CD8-positive, alpha-beta T cell (primary cell): ENCODE measurements at regions of chr11 and their contacts with region 1.

Region 1: DNA sequence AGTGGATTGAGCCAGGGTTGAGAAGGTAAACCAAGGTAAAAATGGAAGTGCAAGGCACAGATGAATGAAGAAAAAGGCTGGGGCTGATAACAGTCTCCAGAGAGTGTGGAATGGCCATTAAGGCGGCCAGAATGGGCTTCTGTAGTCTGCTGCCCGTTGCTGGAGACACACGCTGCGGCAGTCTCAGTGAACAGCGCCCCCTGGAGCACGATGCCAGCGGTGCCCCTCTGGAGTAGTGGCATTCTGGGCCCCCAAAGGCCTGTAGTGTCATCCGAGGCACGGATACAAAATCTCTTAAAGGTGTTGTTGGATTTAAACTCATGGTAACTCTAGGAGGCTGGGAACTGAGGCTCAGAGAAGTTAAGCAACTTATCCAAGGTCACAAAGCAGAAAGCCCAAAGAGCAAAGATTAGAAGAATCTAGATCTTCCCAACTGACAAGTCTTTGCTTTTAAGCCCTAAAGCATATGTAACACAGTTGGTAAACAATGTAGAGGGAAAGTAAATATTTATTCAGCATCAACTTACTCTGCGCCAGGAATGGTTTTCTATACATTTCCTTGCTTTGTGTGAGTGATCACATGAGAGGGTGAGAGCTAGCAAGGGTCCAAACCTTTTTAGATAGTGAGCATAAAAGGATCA is 18.2 kb downstream of the KCNJ1 start:
- DNase-seq: peak; percentile 42 to 80 (median 69)
- ATAC-seq: peak; percentile 70
- H3K4me3 ChIP-seq: no peak overlapping the region
- H3K4me3 Mint-ChIP-seq: no peak overlapping the region
- H3K27ac ChIP-seq: no peak overlapping the region
- H3K27ac Mint-ChIP-seq: no peak overlapping the region
- H3K4me1 ChIP-seq: peaks cover 14% of the 10 kb centered on the region
- H3K4me1 Mint-ChIP-seq: peaks cover 28% of the 10 kb centered on the region
- H3K27me3 ChIP-seq: no peaks in the 10 kb centered on the region
- H3K27me3 Mint-ChIP-seq: no peaks in the 10 kb centered on the region
- CTCF ChIP-seq: peak; percentile 73

Region 2: DNA sequence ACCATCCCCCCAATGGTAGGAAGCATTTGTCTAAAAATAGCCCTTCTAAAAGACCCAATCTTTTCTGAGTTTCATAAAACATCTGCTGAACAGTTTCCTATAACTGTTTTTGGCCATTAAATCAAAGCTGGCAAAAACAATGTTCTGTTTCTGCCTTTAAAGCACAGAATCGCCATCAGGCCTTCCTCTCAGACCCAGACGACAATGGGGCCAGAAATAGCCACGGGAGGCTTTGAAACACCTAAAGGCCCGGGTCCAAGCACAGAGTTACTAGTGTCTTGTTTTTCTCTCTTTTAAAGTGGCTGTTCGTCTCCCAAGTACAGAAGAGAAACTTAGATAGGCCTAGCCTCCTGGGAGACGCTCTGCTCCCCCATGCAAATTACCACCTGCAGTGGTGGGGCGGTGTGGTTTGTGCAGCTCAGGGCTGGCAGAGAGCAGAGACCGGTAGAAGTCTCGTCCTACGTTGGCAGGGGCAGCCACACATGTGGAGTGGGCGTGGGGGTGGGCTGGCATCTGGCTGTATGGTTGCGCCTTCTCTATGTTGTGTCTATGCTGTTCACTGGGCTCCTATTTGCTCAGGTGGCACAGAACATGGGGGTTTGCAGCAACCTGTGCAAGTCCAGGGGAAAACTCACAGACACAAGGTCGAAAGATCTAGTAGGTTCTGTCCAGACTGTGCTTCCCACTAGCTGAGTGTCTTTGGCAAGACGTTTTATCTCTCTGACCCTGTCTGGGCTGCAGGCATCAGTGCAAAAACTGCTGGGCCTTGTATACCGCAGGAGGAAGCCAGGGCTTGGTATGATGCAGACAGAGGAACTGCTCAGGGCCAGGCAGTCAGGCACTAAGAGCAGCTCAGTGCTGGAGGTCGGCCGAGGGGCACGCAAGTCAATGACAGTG is 238.0 kb before region 1 on chr11:
- CTCF ChIA-PET with region 1: no interaction called
- POLR2A ChIA-PET with region 1: no interaction called
- intact Hi-C with region 1: no loop called
- DNase-seq: peak; percentile 50 to 87 (median 74)
- ATAC-seq: peak; percentile 88
- H3K4me3 ChIP-seq: peak overlapping the region in 1 of 2 experiments; percentile 9
- H3K4me3 Mint-ChIP-seq: peak overlapping the region; percentile 57
- H3K27ac ChIP-seq: peak overlapping the region; percentile 50 to 70
- H3K27ac Mint-ChIP-seq: peak overlapping the region; percentile 92
- H3K4me1 ChIP-seq: peaks cover 63% of the 10 kb centered on the region
- H3K4me1 Mint-ChIP-seq: peaks cover 87% of the 10 kb centered on the region
- H3K27me3 ChIP-seq: no peaks in the 10 kb centered on the region
- H3K27me3 Mint-ChIP-seq: no peaks in the 10 kb centered on the region
- CTCF ChIP-seq: no peak

Region 3: DNA sequence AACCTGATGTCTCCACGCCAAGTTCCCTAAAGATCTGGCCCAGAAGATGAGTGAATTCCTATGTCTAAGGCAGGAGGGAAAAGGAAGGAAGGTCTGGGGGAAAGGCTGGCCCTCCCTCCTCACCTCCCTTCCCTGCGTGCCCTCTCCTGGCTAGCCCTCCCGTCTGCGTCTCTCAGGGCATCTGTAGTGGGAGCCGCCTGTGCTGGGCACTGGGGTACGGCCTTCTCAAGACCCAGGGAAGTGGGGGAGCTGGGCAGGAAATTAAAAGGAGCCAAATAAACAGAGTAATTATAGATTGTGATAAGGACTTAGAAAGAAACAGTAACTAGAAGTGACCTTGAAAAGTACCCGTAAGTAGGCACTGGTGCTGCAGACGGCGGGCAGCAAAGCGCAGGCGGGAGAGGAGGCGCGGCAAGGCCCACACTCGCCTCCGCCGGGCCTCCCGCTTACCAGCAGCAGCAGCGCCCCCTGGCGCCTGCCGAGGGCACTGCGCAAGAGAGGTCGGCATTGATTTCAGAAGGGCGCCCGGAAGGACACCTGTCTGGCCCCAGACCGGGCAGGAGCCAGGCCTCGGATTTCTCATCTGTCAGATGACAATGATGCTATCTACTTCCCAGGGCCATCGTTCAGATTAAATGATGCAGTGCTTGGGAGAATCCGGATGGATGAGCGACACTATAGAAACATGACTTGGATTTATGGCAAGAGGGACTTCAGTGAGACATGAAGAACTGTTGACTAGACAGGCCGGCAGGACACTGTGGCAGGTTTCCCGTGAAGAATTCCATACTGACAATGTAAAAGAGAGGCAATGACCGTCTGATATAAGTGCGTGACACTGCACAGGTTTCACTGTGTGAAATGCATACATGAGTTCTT is 10.9 kb after region 1 on chr11:
- CTCF ChIA-PET with region 1: interaction called, 82 read pairs
- POLR2A ChIA-PET with region 1: interaction called, 3 read pairs
- intact Hi-C with region 1: no loop called
- DNase-seq: peak; percentile 64 to 83 (median 75)
- ATAC-seq: peak; percentile 97
- H3K4me3 ChIP-seq: no peak overlapping the region
- H3K4me3 Mint-ChIP-seq: no peak overlapping the region
- H3K27ac ChIP-seq: no peak overlapping the region
- H3K27ac Mint-ChIP-seq: no peak overlapping the region
- H3K4me1 ChIP-seq: no peaks in the 10 kb centered on the region
- H3K4me1 Mint-ChIP-seq: peaks cover 4% of the 10 kb centered on the region
- H3K27me3 ChIP-seq: no peaks in the 10 kb centered on the region
- H3K27me3 Mint-ChIP-seq: peaks cover 2% of the 10 kb centered on the region
- CTCF ChIP-seq: peak; percentile 99

Region 4: GRCh38 chr11:128874427-128874826 is 25.5 kb after region 1 on chr11:
- CTCF ChIA-PET with region 1: no interaction called
- POLR2A ChIA-PET with region 1: no interaction called
- intact Hi-C with region 1: no loop called
- DNase-seq: no peak
- ATAC-seq: no peak
- H3K4me3 ChIP-seq: no peak overlapping the region
- H3K4me3 Mint-ChIP-seq: no peak overlapping the region
- H3K27ac ChIP-seq: no peak overlapping the region
- H3K27ac Mint-ChIP-seq: no peak overlapping the region
- H3K4me1 ChIP-seq: no peaks in the 10 kb centered on the region
- H3K4me1 Mint-ChIP-seq: peaks cover 3% of the 10 kb centered on the region
- H3K27me3 ChIP-seq: no peaks in the 10 kb centered on the region
- H3K27me3 Mint-ChIP-seq: peaks cover 10% of the 10 kb centered on the region
- CTCF ChIP-seq: no peak

Region 5: GRCh38 chr11:128917144-128917724 is 68.3 kb after region 1 on chr11:
- CTCF ChIA-PET with region 1: no interaction called
- POLR2A ChIA-PET with region 1: no interaction called
- intact Hi-C with region 1: no loop called
- DNase-seq: peak in 2 of 9 experiments; percentile 17 to 23
- ATAC-seq: no peak
- H3K4me3 ChIP-seq: no peak overlapping the region
- H3K4me3 Mint-ChIP-seq: no peak overlapping the region
- H3K27ac ChIP-seq: no peak overlapping the region
- H3K27ac Mint-ChIP-seq: no peak overlapping the region
- H3K4me1 ChIP-seq: no peaks in the 10 kb centered on the region
- H3K4me1 Mint-ChIP-seq: no peaks in the 10 kb centered on the region
- H3K27me3 ChIP-seq: no peaks in the 10 kb centered on the region
- H3K27me3 Mint-ChIP-seq: peaks cover 14% of the 10 kb centered on the region
- CTCF ChIP-seq: no peak

Region 6: GRCh38 chr11:130499828-130500227 is 1650.9 kb after region 1 on chr11:
- CTCF ChIA-PET with region 1: no interaction called
- POLR2A ChIA-PET with region 1: no interaction called
- intact Hi-C with region 1: no loop called
- DNase-seq: no peak
- ATAC-seq: no peak
- H3K4me3 ChIP-seq: no peak overlapping the region
- H3K4me3 Mint-ChIP-seq: no peak overlapping the region
- H3K27ac ChIP-seq: no peak overlapping the region
- H3K27ac Mint-ChIP-seq: no peak overlapping the region
- H3K4me1 ChIP-seq: no peaks in the 10 kb centered on the region
- H3K4me1 Mint-ChIP-seq: no peaks in the 10 kb centered on the region
- H3K27me3 ChIP-seq: no peaks in the 10 kb centered on the region
- H3K27me3 Mint-ChIP-seq: peaks cover 17% of the 10 kb centered on the region
- CTCF ChIP-seq: no peak